ENCODE measurements at regions of chr17 and their contacts with region 1.

Region 1: GRCh38 chr17:50547035-50547735 is at the start of gene SPATA20:
- DNase-seq: peak; percentile 97
- total RNA-seq, gene SPATA20: 30.1 to 53.4 TPM

Region 2: GRCh38 chr17:49486012-49486641 is 1061.1 kb before region 1 on chr17:
- intact Hi-C with region 1: no loop called
- DNase-seq: no peak

Region 3: DNA sequence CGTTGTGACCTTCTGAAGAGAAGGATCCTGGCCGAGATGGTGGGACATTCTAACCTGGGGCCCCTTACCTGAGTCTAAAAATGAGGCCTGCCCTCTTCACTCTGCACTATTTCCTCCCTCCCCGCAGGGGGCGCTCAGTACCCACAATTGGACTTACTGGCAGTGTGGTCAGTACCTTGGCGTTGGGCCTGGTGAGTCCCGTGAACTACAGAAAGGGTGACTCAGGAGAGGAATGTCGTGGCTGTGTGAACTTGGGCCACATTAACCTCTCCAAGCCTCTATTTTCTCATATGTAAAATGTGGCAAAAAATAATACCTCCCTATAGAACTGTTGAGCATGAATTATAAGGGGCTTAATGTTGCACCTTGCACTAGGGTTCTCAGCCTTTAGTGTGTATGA is 64.7 kb before region 1 on chr17:
- intact Hi-C with region 1: loop called in 1 of 2 experiments (anchors 5 kb)
- DNase-seq: peak; percentile 98

Region 4: GRCh38 chr17:50626037-50626574 is 78.9 kb after region 1 on chr17:
- intact Hi-C with region 1: loop called in 1 of 2 experiments (anchors 5 kb)
- DNase-seq: peak; percentile 91

Region 5: DNA sequence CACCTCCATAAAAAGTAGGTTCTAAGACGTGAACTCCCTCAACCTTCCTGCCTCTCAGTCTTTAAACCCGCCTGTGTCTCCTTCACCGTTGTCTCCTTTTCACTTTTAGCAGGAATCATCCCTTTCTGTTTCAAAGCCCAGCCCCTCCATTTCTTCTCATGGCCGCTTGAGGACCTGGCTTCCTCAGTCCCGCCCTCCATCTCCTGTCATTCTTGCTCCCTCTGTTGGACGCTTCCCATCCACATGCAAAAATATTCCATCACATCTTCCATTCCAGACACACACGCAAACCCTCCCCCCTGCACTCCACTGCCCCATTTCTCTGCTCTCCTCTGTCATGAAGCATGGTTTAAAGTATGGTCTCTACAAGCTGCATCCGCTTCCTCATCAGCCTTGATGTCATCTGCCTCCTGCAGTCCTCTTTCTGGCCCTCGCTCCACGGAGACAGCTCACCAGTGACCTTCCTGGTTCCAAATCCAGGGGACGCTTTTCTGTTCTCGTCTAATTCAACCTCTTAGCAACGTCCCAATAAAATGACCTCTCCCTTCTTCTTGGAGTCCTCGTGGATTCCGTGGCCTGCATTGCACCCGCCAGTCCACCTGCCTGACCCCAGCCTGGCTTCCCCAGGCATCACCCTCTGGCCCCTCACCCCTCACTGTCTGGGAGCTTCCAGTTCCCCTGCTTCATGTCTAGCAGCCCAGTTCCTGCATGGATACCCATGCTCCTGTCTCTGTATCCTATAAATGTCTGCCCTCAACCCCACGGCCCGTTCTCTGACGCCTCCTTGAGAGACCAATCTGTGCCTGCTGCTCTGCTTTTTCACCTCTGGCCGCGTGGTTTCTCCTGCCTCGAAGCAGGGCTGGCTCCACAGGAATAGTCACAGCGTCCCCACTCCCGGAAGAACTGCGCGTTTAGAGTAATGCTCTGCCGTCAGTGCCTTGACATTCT is 134.4 kb after region 1 on chr17:
- intact Hi-C with region 1: loop called (anchors 5 kb)
- DNase-seq: peak; percentile 76

Region 6: GRCh38 chr17:50697663-50698274 is 150.6 kb after region 1 on chr17:
- intact Hi-C with region 1: loop called (anchors 1 to 5 kb)
- DNase-seq: no peak

Region 7: GRCh38 chr17:50783193-50783660 is 236.0 kb after region 1 on chr17:
- intact Hi-C with region 1: loop called in 1 of 2 experiments (anchors 2 kb)
- DNase-seq: peak; percentile 95

Region 8: GRCh38 chr17:50841949-50842354 is 294.8 kb after region 1 on chr17:
- intact Hi-C with region 1: loop called (anchors 2 kb)
- DNase-seq: peak; percentile 89

Region 9: DNA sequence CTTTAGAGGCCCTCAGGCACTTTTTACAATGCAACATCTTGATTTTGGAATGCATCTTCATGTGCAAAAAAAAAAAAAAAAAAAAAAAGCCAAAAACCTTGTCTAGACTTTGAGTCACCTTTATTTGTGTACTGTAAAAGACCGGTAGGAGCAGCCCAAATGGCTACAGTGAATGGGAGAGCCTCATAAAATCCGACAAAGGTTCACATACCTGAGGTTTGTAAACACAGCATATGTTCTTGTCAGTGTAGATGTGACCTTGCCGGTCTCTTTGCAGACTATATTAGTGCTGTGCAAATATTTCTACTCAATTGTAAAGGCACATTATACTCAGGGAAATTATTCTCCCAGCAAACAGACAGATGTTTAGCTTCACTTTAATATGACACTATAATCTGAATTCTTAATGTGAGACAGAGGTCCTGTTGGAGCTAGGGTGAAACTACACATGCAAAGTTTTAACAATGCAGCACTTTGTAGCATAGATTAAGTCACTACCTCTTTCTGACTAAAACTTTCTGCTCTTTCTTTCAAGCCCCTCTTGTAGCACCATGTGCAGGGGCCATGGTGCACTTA is 1400.1 kb after region 1 on chr17:
- intact Hi-C with region 1: no loop called
- DNase-seq: no peak

Measured in posterior vena cava (tissue), 2 donors.